PC-3 (cell line): ENCODE measurements at regions of chr4 and their contacts with region 1.

Region 1: DNA sequence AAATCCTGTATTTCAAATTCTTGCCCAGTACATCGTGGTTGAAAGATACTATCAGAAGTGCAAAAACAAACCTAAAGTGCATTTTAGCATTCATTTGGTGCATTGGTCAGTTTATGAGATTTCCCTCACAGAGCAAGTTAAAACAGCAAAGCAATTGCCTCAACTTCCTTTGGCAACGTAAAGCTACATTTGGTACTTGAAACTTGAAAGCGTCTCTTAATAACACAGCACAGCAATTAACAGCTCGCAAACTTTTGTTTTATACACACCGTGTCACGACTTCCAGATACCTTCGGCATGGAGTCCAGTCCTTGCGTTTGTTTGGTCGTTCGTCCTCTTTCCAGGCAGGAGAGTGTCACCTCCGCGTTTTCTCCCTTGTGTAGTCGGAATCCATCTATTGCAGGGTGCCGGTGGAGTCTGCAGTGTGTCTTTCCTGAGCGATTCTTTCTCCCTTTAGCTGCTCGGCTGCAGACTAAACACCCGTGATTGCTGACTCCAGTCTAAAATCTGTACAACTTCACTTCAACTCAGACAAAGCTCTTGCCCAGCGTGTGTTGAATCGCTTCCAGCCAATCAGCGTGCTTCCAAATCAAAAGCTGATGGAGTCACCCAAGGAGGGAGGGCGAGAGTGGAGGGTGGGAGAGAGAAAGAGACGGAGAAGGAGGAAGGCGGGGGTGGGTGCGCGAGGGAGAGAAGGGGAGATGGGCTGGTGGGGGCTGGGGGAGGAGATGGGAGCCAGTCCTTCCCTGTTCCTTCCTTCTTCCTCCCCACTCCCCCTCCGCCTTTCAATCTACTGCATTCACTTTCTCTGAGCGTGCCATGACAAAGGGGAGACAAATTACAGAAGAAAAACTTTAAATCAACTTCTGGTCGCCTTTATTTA is at the start of gene PCDH18:
- DNase-seq: peak; percentile 75
- ATAC-seq: peak; percentile 75
- H3K4me3 ChIP-seq: peak within 1 kb of the TSS; percentile 97
- H3K27ac ChIP-seq: peak within 1 kb of the TSS; percentile 17; the same call in 1 of the 2 replicates
- H3K4me1 ChIP-seq: peaks cover 14% of the 10 kb centered on the region; the same call in 1 of the 2 replicates
- H3K27me3 ChIP-seq: no peaks in the 10 kb centered on the region
- CTCF ChIP-seq: no peak
- total RNA-seq, gene PCDH18: 1.6 and 2.0 TPM in 2 replicates

Region 2: DNA sequence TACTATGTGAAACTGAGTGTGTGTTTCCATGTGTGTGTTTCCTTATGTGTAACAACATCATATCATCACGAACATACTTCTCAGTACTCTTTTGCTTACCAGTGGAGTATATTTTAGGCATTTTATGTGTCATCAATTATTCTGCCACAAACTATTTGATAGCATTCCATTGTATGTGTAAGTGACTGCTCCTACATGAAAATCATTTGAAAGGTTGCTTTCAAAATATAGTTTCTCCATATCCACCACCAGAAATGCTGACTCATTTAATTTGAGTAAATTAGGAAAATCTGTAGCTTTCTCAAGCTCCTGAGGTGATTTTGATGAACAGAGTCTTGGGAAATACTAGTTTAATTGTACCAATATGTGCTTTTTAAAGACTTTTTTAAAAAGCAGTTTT is 376.2 kb before region 1 on chr4:
- CTCF ChIA-PET with region 1: no interaction called
- POLR2A ChIA-PET with region 1: no interaction called
- intact Hi-C with region 1: no loop called
- DNase-seq: peak; percentile 14
- ATAC-seq: no peak
- H3K4me3 ChIP-seq: no peak overlapping the region
- H3K27ac ChIP-seq: no peak overlapping the region
- H3K4me1 ChIP-seq: no peaks in the 10 kb centered on the region
- H3K27me3 ChIP-seq: no peaks in the 10 kb centered on the region
- CTCF ChIP-seq: no peak

Region 3: DNA sequence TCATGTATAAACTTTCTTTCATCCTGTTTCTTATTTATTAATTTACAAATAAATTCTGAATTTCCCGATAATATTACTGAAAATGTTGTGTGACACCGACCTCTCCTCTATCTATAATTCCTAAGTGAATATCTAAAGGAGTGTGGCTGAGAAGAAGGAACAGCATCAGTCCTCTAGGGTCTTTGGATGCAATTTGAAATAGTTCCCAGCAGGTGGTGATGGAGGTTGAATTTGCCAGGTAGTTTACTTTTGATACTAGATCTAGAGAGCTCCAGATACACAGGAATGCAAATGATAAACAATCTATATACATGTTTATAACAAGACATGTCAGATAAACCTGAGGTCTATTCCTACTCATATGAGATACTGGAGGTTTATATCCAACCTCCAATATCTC is 305.3 kb before region 1 on chr4:
- CTCF ChIA-PET with region 1: no interaction called
- POLR2A ChIA-PET with region 1: no interaction called
- intact Hi-C with region 1: loop called (anchors 5 kb)
- DNase-seq: peak; percentile 55
- ATAC-seq: peak; percentile 60
- H3K4me3 ChIP-seq: no peak overlapping the region
- H3K27ac ChIP-seq: no peak overlapping the region
- H3K4me1 ChIP-seq: no peaks in the 10 kb centered on the region
- H3K27me3 ChIP-seq: no peaks in the 10 kb centered on the region
- CTCF ChIP-seq: peak; percentile 60

Region 4: GRCh38 chr4:137370206-137370633 is 162.0 kb before region 1 on chr4:
- CTCF ChIA-PET with region 1: no interaction called
- POLR2A ChIA-PET with region 1: no interaction called
- intact Hi-C with region 1: loop called (anchors 5 kb)
- DNase-seq: peak; percentile 60
- ATAC-seq: peak; percentile 87
- H3K4me3 ChIP-seq: no peak overlapping the region
- H3K27ac ChIP-seq: no peak overlapping the region
- H3K4me1 ChIP-seq: peaks cover 12% of the 10 kb centered on the region; the same call in 1 of the 2 replicates
- H3K27me3 ChIP-seq: no peaks in the 10 kb centered on the region
- CTCF ChIP-seq: no peak

Region 5: DNA sequence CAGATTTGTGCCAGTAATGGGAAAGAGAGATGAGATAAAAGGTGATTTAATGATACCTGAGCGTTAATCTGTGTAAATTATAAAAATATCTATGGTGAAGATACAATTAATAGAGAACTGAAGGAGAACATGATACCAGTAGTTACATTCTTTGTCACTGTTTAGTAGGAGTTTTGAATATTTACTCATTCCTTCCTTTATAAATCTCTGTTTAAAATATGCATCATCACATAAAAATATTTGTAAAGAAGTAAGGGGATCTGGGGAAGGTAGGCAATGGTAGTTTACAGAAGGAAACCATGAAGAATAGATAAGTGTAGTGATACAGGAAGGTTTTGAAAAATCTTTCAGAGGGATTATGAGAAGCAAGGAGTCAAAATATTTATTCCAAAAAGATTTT is 190.7 kb after region 1 on chr4:
- CTCF ChIA-PET with region 1: no interaction called
- POLR2A ChIA-PET with region 1: no interaction called
- intact Hi-C with region 1: loop called (anchors 10 kb)
- DNase-seq: peak; percentile 16
- ATAC-seq: peak; percentile 79
- H3K4me3 ChIP-seq: no peak overlapping the region
- H3K27ac ChIP-seq: no peak overlapping the region
- H3K4me1 ChIP-seq: peaks cover 12% of the 10 kb centered on the region; the same call in 1 of the 2 replicates
- H3K27me3 ChIP-seq: no peaks in the 10 kb centered on the region
- CTCF ChIP-seq: no peak